Activated CD8-positive, alpha-beta memory T cell treated with anti-CD3 and anti-CD28 coated beads, Interleukin-2, amount 10 ng/mL, durations not matched to agents 7 days and 5 days (primary cell): ENCODE measurements at regions of chr2 and their contacts with region 1.

Region 1: DNA sequence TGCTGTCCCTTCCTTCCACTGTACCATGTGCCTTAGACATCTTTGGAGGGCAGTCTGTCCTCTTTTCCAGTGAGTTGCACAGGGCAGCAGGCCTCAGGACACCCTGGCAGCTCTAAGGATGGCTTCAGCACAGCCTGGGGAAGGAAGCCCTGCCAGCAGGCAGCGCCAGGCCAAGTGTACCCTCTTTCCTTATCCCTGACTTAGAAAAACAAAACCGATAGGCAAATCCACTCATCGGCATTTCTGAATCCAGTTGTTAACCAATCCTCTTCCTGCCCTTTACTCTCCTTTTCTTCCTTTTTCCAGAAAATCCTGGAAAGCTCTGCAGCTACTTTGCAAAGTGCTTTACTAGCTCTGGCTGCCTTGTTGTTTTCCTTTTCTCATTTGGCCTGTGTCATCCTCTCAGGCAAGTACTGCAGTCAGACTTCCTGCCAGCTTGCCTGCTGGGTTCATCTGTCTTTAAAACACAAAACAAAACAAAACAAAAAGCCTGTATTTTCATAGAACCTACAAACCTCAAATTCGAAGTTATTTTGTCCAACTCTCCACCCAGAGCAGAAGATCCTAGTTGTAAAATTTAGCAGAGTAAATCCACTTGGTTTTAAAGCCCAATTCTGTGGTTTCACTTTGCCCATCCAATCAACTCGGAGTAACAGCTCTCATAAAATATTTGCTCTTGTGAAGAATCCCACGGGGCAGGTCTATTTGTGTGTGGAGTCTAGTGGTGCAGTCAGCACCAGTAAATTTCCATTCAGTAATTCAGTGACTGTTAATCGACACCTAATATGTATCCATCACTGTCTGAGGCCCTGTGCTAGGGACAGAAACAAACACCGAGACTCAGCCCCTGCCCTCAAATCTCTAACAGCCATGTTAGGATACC is 45.2 kb downstream of the PCBP1 start:
- DNase-seq: peak; percentile 68
- ATAC-seq: peak; percentile 54
- H3K4me3 Mint-ChIP-seq: peak overlapping the region; percentile 80
- H3K27ac Mint-ChIP-seq: peak overlapping the region; percentile 100
- H3K4me1 Mint-ChIP-seq: peaks cover 75% of the 10 kb centered on the region
- H3K27me3 Mint-ChIP-seq: no peaks in the 10 kb centered on the region

Region 2: DNA sequence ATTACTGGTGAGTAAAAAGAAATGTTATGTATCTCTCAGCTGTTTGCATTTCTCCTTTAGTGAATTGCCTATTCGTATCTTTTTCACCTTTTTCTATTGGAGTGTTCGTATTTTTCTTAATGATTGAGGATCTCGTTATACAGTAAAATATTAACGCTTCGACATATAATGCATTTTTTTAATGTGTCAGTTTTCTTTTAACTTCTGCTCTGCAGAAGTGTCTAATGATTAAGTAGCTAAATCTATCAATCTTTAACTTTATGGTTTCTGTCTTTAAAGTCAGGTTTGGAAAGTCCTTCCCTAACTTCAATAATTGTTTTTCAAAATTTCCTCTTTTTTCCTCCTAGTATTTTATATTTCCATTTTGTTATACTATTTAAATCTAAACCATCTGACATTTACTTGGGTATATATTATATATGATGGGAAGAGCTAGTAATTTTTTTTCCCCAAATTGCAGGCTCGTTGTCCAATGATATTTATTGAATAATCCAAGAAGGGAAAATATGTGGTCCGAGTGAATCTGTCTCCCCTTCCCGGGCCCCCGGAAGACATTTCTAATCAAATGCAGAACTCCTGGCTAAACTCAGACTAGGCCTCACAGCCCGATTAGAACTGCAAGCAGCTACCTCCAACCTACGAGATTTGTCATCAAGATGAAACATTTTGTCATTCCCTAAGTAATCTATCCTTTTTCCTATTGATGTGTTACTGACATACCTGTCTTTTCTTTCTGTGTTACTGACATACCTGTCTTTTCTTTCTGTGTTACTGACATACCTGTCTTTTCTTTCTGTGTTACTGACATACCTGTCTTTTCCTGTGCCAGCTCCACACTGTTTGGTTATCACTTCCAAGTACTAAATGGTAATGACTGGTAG is 28.0 kb before region 1 on chr2:
- CTCF ChIA-PET with region 1: interaction called, 24 read pairs
- DNase-seq: peak; percentile 78
- ATAC-seq: no peak
- H3K4me3 Mint-ChIP-seq: peak overlapping the region; percentile 75
- H3K27ac Mint-ChIP-seq: peak overlapping the region; percentile 95
- H3K4me1 Mint-ChIP-seq: peaks cover 53% of the 10 kb centered on the region
- H3K27me3 Mint-ChIP-seq: no peaks in the 10 kb centered on the region